ENCODE measurements at regions of chr20 and their contacts with region 1.

Region 1: GRCh38 chr20:1830240-1830639 is 65.0 kb upstream of the SIRPA start:
- DNase-seq: no peak
- ATAC-seq: no peak
- H3K4me3 ChIP-seq: no peak overlapping the region
- H3K27ac ChIP-seq: no peak overlapping the region
- H3K4me1 ChIP-seq: peaks cover 62% of the 10 kb centered on the region
- H3K27me3 ChIP-seq: no peaks in the 10 kb centered on the region; a peak in 1 of 5 replicates
- CTCF ChIP-seq: no peak
- EP300 ChIP-seq: no peak
- POLR2A ChIP-seq: no peak
- RAD21 ChIP-seq: no peak

Region 2: DNA sequence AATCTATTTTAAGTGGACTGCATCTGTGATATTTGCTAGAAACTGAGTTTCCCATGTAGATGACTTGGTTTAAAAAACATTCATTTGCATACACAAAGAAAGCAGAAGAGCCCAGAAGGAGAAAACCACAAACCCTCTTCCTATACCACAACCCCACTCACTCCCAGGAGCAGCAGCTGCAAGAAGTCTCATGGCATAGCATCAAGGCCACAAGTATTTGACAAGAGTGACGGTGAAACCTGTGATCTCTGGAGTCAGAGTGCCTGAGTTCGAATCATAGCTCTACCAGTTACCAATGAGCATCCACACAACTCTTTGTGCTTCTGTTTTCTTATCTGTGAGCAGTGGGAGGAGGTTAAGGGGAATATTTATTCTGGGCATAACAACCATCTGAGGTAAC is 127.9 kb before region 1 on chr20:
- CTCF ChIA-PET with region 1: no interaction called
- POLR2A ChIA-PET with region 1: no interaction called
- in situ Hi-C with region 1: no loop called
- intact Hi-C with region 1: no loop called
- DNase-seq: no peak
- ATAC-seq: no peak
- H3K4me3 ChIP-seq: no peak overlapping the region
- H3K27ac ChIP-seq: no peak overlapping the region
- H3K4me1 ChIP-seq: no peaks in the 10 kb centered on the region
- H3K27me3 ChIP-seq: peaks cover 0 to 7% of the 10 kb centered on the region in 2 experiments; a peak in 1 of 5 replicates
- CTCF ChIP-seq: no peak
- EP300 ChIP-seq: no peak
- POLR2A ChIP-seq: no peak
- RAD21 ChIP-seq: no peak

Region 3: GRCh38 chr20:1810926-1811620 is 19.2 kb before region 1 on chr20:
- CTCF ChIA-PET with region 1: no interaction called
- POLR2A ChIA-PET with region 1: interaction called, 31 read pairs
- in situ Hi-C with region 1: no loop called
- intact Hi-C with region 1: loop called (anchors 1 kb)
- DNase-seq: peak; percentile 61
- ATAC-seq: peak; percentile 40
- H3K4me3 ChIP-seq: peak overlapping the region in 1 of 3 experiments; percentile 47; a peak in 2 of 6 replicates
- H3K27ac ChIP-seq: peak overlapping the region; percentile 74
- H3K4me1 ChIP-seq: peaks cover 47% of the 10 kb centered on the region
- H3K27me3 ChIP-seq: no peaks in the 10 kb centered on the region
- CTCF ChIP-seq: no peak
- EP300 ChIP-seq: no peak
- POLR2A ChIP-seq: no peak
- RAD21 ChIP-seq: no peak

Region 4: GRCh38 chr20:1857466-1857865 is 27.2 kb after region 1 on chr20:
- CTCF ChIA-PET with region 1: no interaction called
- POLR2A ChIA-PET with region 1: interaction called, 24 read pairs
- in situ Hi-C with region 1: no loop called
- intact Hi-C with region 1: loop called (anchors 2 kb)
- DNase-seq: no peak
- ATAC-seq: peak; percentile 34; the same call in 2 of the 3 replicates
- H3K4me3 ChIP-seq: no peak overlapping the region
- H3K27ac ChIP-seq: no peak overlapping the region
- H3K4me1 ChIP-seq: peaks cover 67% of the 10 kb centered on the region
- H3K27me3 ChIP-seq: no peaks in the 10 kb centered on the region
- CTCF ChIP-seq: no peak
- EP300 ChIP-seq: no peak
- POLR2A ChIP-seq: no peak
- RAD21 ChIP-seq: no peak

Region 5: GRCh38 chr20:1871807-1872458 is 41.7 kb after region 1 on chr20:
- CTCF ChIA-PET with region 1: no interaction called
- POLR2A ChIA-PET with region 1: interaction called, 5 read pairs
- in situ Hi-C with region 1: no loop called
- intact Hi-C with region 1: loop called (anchors 1 kb)
- DNase-seq: no peak
- ATAC-seq: no peak
- H3K4me3 ChIP-seq: no peak overlapping the region
- H3K27ac ChIP-seq: no peak overlapping the region
- H3K4me1 ChIP-seq: peaks cover 69% of the 10 kb centered on the region
- H3K27me3 ChIP-seq: no peaks in the 10 kb centered on the region
- CTCF ChIP-seq: no peak
- EP300 ChIP-seq: no peak
- POLR2A ChIP-seq: no peak
- RAD21 ChIP-seq: no peak

Region 6: DNA sequence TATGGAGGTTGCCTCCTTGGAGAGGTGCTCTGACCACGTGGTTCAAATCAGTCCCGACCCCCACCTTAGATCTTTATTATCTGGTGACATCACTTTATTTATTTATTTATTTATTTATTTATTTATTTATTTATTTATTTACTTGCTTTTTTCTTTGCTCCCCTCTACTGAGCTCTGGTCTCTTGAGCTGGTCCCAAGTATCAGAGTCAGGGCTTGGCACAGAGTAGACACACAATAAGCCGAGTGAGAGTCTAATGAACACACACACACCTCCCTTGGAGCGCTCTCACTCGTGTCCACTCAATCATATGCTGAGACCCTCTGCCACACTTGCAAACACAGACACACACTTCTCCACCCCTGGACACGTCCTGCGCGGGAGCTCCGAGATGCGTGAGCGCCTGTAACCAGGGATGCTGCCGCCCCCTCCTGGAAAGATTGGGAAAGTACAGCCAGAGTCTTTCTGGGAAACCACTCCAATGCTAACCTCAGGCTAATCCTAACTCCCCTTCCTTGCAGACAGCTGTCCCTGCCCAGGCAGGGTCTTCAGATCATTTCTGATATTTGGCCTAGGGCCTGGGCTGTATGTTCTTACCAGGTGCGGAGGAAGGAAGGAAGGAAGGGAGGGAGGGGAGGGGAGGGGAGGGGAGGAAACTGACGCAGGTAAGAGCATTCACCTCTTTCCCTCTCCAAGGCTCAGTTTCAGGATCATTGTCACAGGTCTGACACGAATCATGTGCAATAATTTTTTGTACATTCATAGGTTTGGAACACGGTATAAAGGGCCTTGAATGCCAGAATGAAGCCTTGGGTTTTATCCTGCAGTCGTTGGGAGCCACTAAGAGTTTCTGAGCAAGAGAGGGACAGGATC is 342.3 kb after region 1 on chr20:
- CTCF ChIA-PET with region 1: no interaction called
- POLR2A ChIA-PET with region 1: no interaction called
- in situ Hi-C with region 1: no loop called
- intact Hi-C with region 1: no loop called
- DNase-seq: peak; percentile 55
- ATAC-seq: peak; percentile 84
- H3K4me3 ChIP-seq: no peak overlapping the region
- H3K27ac ChIP-seq: no peak overlapping the region
- H3K4me1 ChIP-seq: no peaks in the 10 kb centered on the region
- H3K27me3 ChIP-seq: peaks cover 2 to 22% of the 10 kb centered on the region in 2 experiments; a peak in 4 of 5 replicates
- CTCF ChIP-seq: peak; percentile 99
- EP300 ChIP-seq: no peak
- POLR2A ChIP-seq: no peak
- RAD21 ChIP-seq: peak; percentile 98

Measured in HepG2 (cell line).